OCI-LY7 (cell line): ENCODE measurements at regions of chr6 and their contacts with region 1.

Region 1: GRCh38 chr6:70884074-70884983 is 72.5 kb downstream of the B3GAT2 start:
- DNase-seq: peak; percentile 61
- H3K4me3 ChIP-seq: no peak overlapping the region
- H3K27ac ChIP-seq: no peak overlapping the region
- H3K4me1 ChIP-seq: no peaks in the 10 kb centered on the region
- CTCF ChIP-seq: peak; percentile 94

Region 2: GRCh38 chr6:70520575-70520974 is 363.8 kb before region 1 on chr6:
- CTCF ChIA-PET with region 1: no interaction called
- POLR2A ChIA-PET with region 1: interaction called, 3 read pairs
- intact Hi-C with region 1: loop called (anchors 2 kb)
- DNase-seq: peak; percentile 27
- H3K4me3 ChIP-seq: no peak overlapping the region
- H3K27ac ChIP-seq: no peak overlapping the region
- H3K4me1 ChIP-seq: no peaks in the 10 kb centered on the region
- CTCF ChIP-seq: peak; percentile 76

Region 3: GRCh38 chr6:70706491-70707123 is 177.7 kb before region 1 on chr6:
- CTCF ChIA-PET with region 1: interaction called, 7 read pairs
- POLR2A ChIA-PET with region 1: interaction called, 7 read pairs
- intact Hi-C with region 1: loop called (anchors 1 kb)
- DNase-seq: peak; percentile 62
- H3K4me3 ChIP-seq: no peak overlapping the region
- H3K27ac ChIP-seq: no peak overlapping the region
- H3K4me1 ChIP-seq: no peaks in the 10 kb centered on the region
- CTCF ChIP-seq: peak; percentile 96

Region 4: DNA sequence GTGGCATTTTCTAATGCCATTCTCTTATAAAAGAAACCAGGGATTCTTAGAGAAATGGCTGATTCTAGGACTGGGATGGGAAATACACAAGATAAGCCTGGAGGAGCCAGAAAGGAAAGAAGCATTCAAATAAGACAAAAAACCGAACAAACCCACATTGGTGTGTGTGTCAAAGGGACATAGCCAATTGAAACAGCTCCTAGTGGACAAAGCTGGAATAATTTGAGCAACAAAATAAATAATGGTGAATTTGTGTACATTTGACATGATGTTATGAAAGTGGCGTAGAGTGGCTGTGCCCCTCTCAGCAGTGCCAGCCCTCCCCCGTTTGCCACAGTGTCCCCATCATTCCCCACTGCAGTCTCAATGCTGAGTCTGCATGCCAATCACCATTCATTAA is 17.0 kb after region 1 on chr6:
- CTCF ChIA-PET with region 1: no interaction called
- POLR2A ChIA-PET with region 1: no interaction called
- intact Hi-C with region 1: no loop called
- DNase-seq: no peak
- H3K4me3 ChIP-seq: no peak overlapping the region
- H3K27ac ChIP-seq: no peak overlapping the region
- H3K4me1 ChIP-seq: no peaks in the 10 kb centered on the region
- CTCF ChIP-seq: peak; percentile 61